ENCODE measurements at regions of chr7 and their contacts with region 1.

Region 1: DNA sequence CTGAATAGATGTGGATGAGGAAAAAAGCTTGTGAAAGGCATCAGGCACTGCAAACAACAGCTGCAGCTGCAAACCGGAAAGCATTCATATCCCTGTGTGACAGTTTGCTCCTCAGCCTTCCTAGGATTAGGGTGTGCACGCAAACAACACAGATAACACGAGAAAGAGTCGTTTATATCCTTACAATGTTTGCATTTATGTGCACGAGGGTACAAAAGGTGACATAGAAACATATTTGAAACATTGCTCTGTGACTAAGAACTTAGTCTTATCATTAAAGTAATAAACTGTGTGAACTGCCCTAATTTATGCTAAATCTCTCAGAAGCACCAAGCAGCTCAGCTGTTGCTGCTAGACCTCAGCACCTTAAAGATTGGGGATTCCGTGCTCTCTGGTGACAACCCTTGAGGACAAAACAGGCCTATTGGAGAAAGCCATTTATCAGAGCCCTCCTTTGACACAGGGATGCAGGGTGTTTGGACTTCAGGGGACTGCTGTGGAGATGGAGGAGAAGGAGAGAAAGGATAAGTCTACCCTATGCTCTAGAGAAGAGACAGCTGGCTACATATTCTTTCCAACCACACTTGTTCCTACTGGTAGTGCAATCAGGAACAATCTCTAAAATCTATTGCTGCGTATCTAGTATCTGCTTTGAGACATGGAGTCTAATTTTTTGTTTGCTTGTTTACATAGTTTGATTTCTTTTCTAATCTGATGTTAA is 176.2 kb downstream of the GNAT3 start:
- DNase-seq: peak; percentile 83
- H3K4me3 ChIP-seq: no peak overlapping the region
- H3K27ac ChIP-seq: no peak overlapping the region
- H3K4me1 ChIP-seq: peaks cover 10% of the 10 kb centered on the region
- H3K27me3 ChIP-seq: no peaks in the 10 kb centered on the region
- CTCF ChIP-seq: no peak
- POLR2A ChIP-seq: no peak

Region 2: DNA sequence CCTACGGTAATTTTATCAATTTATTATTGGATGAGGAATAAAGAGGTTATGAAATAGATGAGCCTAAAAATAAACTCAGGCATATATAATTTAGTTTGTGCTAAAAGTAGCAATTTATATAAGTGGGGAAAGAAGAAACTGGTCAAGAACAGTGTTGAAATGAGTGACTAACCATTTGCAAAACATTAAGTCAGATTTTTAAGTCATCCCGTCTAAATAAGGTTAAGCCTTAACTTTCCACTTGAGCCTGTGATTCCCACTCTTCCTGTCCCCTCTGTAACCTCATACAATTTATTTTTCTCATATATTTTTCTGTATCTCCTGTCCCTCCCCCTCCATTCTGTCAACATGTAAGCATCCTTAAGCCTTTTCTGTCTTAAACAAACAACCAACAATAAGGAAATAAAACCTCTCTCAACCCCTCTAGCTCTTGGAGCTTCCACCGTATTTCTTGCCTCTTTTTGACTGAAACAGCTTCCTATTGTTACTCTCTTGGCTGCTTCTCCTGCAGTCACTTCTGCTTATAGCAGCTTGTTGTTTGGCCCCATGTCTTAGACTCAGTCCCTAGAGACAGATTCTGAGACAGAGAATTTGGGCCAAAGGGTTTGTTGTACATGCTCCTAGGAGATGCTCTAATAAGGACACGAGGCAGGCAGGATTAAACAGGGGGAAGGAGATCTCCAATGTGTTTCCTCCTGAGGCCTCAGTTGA is 91.3 kb before region 1 on chr7:
- CTCF ChIA-PET with region 1: no interaction called
- POLR2A ChIA-PET with region 1: no interaction called
- dilution Hi-C with region 1: no loop called
- intact Hi-C with region 1: no loop called
- DNase-seq: peak; percentile 6
- H3K4me3 ChIP-seq: no peak overlapping the region
- H3K27ac ChIP-seq: no peak overlapping the region
- H3K4me1 ChIP-seq: peaks cover 8% of the 10 kb centered on the region
- H3K27me3 ChIP-seq: no peaks in the 10 kb centered on the region
- CTCF ChIP-seq: no peak
- POLR2A ChIP-seq: no peak

Region 3: GRCh38 chr7:80324032-80324431 is 11.6 kb before region 1 on chr7:
- CTCF ChIA-PET with region 1: no interaction called
- POLR2A ChIA-PET with region 1: no interaction called
- dilution Hi-C with region 1: no loop called
- intact Hi-C with region 1: loop called (anchors 1 kb)
- DNase-seq: peak; percentile 37
- H3K4me3 ChIP-seq: no peak overlapping the region
- H3K27ac ChIP-seq: no peak overlapping the region
- H3K4me1 ChIP-seq: peaks cover 4% of the 10 kb centered on the region
- H3K27me3 ChIP-seq: no peaks in the 10 kb centered on the region
- CTCF ChIP-seq: no peak
- POLR2A ChIP-seq: no peak

Region 4: DNA sequence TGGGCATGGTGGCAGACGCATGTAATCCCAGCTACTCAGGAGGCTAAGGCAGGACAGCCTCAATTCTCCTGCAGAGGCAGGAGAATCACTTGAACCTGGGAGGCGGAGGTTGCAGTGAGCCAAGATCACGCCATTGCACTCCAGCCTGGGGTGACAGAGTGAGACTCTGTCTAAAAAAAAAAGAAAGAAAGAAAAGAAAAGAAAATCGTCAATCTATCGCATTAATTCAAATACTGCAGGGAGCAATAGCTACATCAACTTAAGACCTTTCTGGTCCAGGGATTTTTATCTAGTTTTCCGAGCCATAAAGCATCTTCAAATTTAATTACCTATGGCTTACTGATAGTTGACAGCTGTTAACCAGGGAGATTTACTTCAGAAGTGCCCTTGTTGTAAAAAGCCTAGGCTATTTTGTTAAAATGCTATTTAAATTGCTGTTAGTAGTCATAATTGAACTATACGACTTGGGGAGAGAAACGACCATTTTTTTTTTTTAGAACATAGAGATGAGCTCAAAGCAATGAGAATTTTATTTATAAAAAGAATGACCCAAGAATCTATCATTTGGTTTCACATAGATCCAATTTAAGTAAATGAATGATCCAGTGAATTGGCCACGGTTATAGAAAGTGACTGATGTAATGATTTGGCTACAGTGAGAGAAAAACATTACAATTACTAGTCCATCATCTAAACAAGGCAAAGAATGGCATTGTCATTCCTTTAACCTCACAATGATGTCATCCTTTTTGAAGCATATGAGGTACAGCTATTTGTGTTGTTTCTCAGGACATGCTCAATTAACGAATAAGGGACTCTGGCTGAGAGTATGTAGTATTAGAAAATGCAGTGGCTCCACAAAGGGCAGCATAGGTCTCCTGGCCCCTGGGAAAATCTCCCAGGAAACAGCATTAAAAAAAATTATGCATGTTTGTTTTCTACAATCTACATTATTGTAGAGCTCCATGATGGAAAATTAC is 497.9 kb after region 1 on chr7:
- CTCF ChIA-PET with region 1: no interaction called
- POLR2A ChIA-PET with region 1: no interaction called
- dilution Hi-C with region 1: no loop called
- intact Hi-C with region 1: no loop called
- DNase-seq: no peak
- H3K4me3 ChIP-seq: no peak overlapping the region
- H3K27ac ChIP-seq: no peak overlapping the region
- H3K4me1 ChIP-seq: no peaks in the 10 kb centered on the region
- H3K27me3 ChIP-seq: no peaks in the 10 kb centered on the region
- CTCF ChIP-seq: no peak
- POLR2A ChIP-seq: no peak

Measured in endothelial cell of umbilical vein (primary cell).